ENCODE measurements at regions of chr10 and their contacts with region 1.

Region 1: DNA sequence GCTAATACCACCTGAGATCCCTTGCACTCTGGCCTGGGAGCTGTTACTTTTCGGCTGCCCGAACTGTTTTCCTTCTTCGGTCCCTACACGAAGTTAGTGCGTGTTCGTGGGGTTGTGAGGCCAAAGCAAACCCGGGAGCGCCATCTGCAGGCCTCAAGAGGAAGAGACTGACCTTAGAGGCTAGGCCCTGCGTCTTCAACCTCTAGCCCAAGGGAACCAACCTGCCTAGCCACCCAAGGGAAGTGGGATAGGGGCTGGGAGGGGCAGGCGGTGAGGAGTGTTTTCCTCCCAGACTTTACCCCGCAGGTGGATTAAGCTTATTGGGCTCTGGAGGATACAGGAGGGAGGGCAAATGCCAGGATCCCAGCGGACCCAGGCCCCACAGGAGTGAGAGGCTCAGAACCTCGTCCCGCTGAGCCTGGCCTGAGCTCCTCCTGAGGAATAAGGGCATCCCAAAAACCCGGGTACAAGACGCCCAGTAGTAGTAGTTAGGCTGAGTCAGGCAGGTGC is 1.7 kb upstream of the PAX2 start:
- DNase-seq: peak; percentile 66
- H3K4me3 Mint-ChIP-seq: no peak overlapping the region
- H3K27ac Mint-ChIP-seq: no peak overlapping the region
- H3K4me1 Mint-ChIP-seq: peaks cover 39% of the 10 kb centered on the region
- H3K27me3 Mint-ChIP-seq: peaks cover 80% of the 10 kb centered on the region

Region 2: DNA sequence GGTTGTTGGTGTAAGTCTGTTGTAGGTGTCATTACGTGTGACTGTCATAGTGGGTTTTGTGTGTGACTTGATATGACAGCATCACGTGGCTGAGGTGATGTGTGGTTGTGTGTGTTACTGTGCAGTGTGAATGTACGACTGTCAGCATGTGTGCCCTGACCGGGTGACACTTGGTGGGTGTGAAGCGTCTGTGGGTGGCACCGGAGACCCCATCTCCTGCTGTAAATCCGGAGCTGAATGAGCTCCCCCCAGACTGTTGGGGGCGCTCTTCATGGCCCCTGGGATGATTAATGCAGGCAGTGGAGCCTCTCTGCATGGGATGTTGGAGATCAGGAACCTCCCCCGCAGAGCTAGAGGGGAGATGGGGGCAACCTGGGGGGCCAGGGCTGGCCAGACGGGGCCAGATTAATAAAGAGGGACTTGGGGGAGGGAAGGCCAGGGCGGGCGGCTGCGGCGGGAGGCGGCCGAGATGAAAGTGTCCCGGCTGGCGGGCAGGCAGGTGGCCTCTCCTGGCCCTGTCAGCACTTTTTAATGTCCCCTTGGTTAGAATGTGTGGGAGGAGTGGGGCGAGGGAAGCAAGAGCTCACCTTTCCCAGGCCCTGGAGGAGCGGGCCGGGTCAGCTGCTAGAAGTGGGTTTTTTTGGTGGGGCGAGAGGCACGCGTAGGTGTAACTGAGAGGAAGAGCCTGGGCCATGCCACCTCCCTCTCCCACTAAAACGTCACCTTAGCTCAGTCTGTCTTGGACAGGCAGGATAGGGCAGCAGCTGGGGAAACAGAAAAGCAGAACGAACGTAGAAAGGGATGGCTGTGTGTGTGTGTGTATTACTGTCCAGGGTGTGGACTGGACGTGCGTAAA is 173.8 kb before region 1 on chr10:
- CTCF ChIA-PET with region 1: interaction called, 10 read pairs
- POLR2A ChIA-PET with region 1: no interaction called
- intact Hi-C with region 1: no loop called
- DNase-seq: no peak
- H3K4me3 Mint-ChIP-seq: no peak overlapping the region
- H3K27ac Mint-ChIP-seq: no peak overlapping the region
- H3K4me1 Mint-ChIP-seq: no peaks in the 10 kb centered on the region
- H3K27me3 Mint-ChIP-seq: peaks cover 35% of the 10 kb centered on the region

Region 3: GRCh38 chr10:100600218-100600617 is 143.5 kb before region 1 on chr10:
- CTCF ChIA-PET with region 1: no interaction called
- POLR2A ChIA-PET with region 1: no interaction called
- intact Hi-C with region 1: no loop called
- DNase-seq: no peak
- H3K4me3 Mint-ChIP-seq: no peak overlapping the region
- H3K27ac Mint-ChIP-seq: no peak overlapping the region
- H3K4me1 Mint-ChIP-seq: no peaks in the 10 kb centered on the region
- H3K27me3 Mint-ChIP-seq: peaks cover 24% of the 10 kb centered on the region

Region 4: GRCh38 chr10:100647928-100648327 is 95.8 kb before region 1 on chr10:
- CTCF ChIA-PET with region 1: no interaction called
- POLR2A ChIA-PET with region 1: no interaction called
- intact Hi-C with region 1: no loop called
- DNase-seq: no peak
- H3K4me3 Mint-ChIP-seq: no peak overlapping the region
- H3K27ac Mint-ChIP-seq: no peak overlapping the region
- H3K4me1 Mint-ChIP-seq: no peaks in the 10 kb centered on the region
- H3K27me3 Mint-ChIP-seq: peaks cover 44% of the 10 kb centered on the region

Region 5: GRCh38 chr10:100728928-100729861 is 14.5 kb before region 1 on chr10:
- CTCF ChIA-PET with region 1: interaction called, 19 read pairs
- POLR2A ChIA-PET with region 1: no interaction called
- intact Hi-C with region 1: no loop called
- DNase-seq: peak; percentile 63
- H3K4me3 Mint-ChIP-seq: no peak overlapping the region
- H3K27ac Mint-ChIP-seq: no peak overlapping the region
- H3K4me1 Mint-ChIP-seq: peaks cover 20% of the 10 kb centered on the region
- H3K27me3 Mint-ChIP-seq: peaks cover 80% of the 10 kb centered on the region

Region 6: DNA sequence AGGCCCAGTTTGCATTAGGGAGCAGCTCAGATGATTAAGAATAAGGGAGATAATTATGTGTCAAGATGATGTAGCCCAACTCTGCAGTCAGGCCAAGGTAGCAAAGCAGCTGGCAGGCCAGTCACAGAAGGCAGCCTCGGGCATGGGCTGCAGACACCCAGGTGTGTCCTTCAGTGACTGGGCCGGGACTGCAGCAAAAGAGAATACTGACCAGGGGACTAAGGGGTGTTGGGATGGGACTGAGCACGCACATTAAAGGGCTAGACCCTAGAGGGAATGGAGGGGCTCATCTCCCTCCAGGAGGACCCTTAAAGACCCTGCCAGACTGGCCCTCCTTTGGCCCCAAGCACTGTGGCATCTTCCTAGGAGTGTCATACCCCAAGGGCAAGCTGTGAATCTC is 40.4 kb after region 1 on chr10:
- CTCF ChIA-PET with region 1: no interaction called
- POLR2A ChIA-PET with region 1: no interaction called
- intact Hi-C with region 1: no loop called
- DNase-seq: no peak
- H3K4me3 Mint-ChIP-seq: no peak overlapping the region
- H3K27ac Mint-ChIP-seq: no peak overlapping the region
- H3K4me1 Mint-ChIP-seq: no peaks in the 10 kb centered on the region
- H3K27me3 Mint-ChIP-seq: peaks cover 25% of the 10 kb centered on the region

Region 7: DNA sequence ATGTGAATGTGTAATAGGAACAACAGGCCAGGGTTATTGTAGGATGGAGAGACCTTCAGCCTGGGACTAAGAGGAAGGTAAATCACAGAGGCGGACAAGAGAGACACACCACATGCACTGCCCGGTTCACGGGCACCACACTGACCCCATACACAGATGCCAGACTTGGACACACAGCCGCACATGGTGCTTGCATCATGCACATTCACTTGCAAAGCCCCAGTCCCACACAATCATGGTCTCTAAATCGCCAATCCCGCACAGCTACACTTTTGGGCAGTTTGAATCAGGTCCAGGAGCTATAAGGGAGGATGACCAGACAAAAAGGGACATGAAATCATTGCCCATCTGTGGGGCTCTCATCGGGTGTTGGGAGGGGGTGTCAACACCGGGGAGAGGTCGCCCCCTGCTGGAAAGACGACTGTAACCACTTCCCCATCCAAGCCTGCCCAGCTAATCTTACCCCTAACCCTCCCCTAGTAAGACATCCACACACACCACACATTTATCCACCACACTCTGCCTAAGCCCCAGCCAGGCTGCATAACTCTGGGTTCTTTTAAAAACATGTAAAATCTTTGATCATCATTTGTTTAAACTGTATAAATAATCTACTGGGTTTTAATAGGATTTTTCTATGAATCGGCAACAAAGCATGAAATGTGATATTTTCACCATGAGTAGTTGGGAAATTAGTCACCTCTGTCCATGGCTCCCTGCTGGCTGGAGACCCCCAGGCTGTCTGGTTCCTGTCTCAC is 128.5 kb after region 1 on chr10:
- CTCF ChIA-PET with region 1: interaction called, 38 read pairs
- POLR2A ChIA-PET with region 1: no interaction called
- intact Hi-C with region 1: loop called (anchors 5 kb)
- DNase-seq: peak; percentile 82
- H3K4me3 Mint-ChIP-seq: no peak overlapping the region
- H3K27ac Mint-ChIP-seq: no peak overlapping the region
- H3K4me1 Mint-ChIP-seq: no peaks in the 10 kb centered on the region
- H3K27me3 Mint-ChIP-seq: peaks cover 16% of the 10 kb centered on the region

Region 8: GRCh38 chr10:101042667-101043355 is 299.1 kb after region 1 on chr10:
- CTCF ChIA-PET with region 1: no interaction called
- POLR2A ChIA-PET with region 1: no interaction called
- intact Hi-C with region 1: no loop called
- DNase-seq: peak; percentile 96
- H3K4me3 Mint-ChIP-seq: peak overlapping the region; percentile 96
- H3K27ac Mint-ChIP-seq: peak overlapping the region; percentile 89
- H3K4me1 Mint-ChIP-seq: peaks cover 21% of the 10 kb centered on the region
- H3K27me3 Mint-ChIP-seq: peaks cover 18% of the 10 kb centered on the region

Region 9: DNA sequence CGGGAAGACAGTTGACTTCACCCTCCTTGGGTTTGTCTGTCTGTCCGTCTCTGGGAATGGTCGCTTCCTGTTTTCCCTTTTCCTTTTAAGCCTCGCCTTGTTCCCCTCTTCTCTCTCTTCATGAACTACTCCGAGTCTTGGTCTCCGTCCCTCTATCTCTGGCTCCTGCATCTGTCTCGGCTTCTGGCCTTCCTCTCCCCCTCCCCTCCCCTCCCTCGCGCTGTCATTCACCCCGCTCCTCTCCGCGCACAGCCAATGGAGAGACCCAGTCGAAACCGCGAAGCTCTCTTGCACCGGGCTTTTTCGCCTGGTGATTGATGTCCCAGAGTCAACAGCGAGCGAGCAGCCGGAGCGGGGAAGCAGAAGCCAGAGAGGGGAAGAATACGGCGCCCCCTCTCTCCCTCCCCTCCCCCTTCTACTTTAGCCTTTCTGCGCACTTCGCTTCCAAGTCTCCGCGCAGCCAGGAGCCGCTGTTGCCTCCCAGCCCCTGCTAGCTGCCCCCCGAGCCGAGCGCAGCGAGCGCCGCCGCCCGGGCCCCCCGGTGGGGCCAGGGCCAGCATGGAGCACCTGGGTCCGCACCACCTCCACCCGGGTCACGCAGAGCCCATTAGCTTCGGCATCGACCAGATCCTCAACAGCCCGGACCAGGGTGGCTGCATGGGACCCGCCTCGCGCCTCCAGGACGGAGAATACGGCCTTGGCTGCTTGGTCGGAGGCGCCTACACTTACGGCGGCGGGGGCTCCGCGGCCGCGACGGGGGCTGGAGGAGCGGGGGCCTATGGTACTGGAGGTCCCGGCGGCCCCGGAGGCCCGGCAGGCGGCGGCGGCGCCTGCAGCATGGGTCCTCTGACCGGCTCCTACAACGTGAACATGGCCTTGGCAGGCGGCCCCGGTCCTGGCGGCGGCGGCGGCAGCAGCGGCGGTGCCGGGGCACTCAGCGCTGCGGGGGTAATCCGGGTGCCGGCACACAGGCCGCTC is 387.6 kb after region 1 on chr10 and contains the start of gene TLX1:
- CTCF ChIA-PET with region 1: no interaction called
- POLR2A ChIA-PET with region 1: no interaction called
- intact Hi-C with region 1: loop called (anchors 10 kb)
- DNase-seq: no peak
- H3K4me3 Mint-ChIP-seq: no peak within 1 kb of the TSS
- H3K27ac Mint-ChIP-seq: no peak within 1 kb of the TSS
- H3K4me1 Mint-ChIP-seq: peaks cover 29% of the 10 kb centered on the region
- H3K27me3 Mint-ChIP-seq: peaks cover 76% of the 10 kb centered on the region
- total RNA-seq, gene TLX1: not detected